ENCODE measurements at regions of chr13 and their contacts with region 1.

Region 1: GRCh38 chr13:111153279-111153976 is 38.3 kb downstream of the ARHGEF7 start:
- DNase-seq: no peak
- ATAC-seq: peak; percentile 85
- H3K4me3 ChIP-seq: peak overlapping the region; percentile 88
- H3K27ac ChIP-seq: peak overlapping the region; percentile 81
- H3K4me1 ChIP-seq: no peaks in the 10 kb centered on the region
- H3K27me3 ChIP-seq: no peaks in the 10 kb centered on the region
- CTCF ChIP-seq: peak; percentile 7 to 20 (median 7); a peak in 2 of 6 replicates
- EP300 ChIP-seq: no peak
- POLR2A ChIP-seq: peak; percentile 93
- RAD21 ChIP-seq: peak; percentile 39; the same call in 1 of the 2 replicates

Region 2: DNA sequence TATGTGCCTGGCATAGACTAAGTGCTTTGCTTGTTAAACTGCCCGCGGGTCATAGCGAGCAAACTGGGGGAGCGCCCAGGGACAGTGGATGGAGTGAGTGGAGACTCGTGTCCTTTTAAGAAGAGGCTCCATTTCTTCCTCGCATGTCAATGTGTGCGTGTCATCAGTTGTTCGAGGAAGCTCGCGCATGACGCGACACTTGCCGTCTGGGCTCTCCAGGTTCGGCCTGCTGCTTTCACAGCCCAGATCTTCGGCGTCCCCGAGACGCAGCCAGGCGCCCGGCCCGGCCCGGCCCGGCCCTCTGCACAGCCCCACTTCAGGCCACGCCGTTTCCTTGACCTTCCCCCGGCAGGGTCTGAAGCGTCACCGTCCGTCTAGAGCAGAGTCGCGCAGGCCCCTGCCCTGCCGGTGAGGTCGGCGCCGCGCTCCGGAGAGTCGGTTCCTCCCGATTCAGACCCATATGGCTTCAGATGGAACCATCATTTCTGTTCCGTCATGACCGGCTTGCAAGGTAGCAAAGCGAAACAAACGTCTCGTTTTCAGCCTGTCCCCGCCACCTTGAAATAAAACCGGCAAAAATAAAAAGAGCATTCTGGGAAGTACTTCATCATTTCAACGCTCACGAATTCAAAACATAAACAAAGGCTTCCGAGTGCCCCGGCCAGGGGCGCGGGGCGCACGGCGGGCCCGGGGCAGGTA is 38.9 kb before region 1 on chr13:
- CTCF ChIA-PET with region 1: no interaction called
- POLR2A ChIA-PET with region 1: no interaction called
- RAD21 ChIA-PET with region 1: no interaction called
- SMC1A ChIA-PET with region 1: no interaction called
- in situ Hi-C with region 1: no loop called
- intact Hi-C with region 1: no loop called
- DNase-seq: no peak
- ATAC-seq: peak; percentile 78
- H3K4me3 ChIP-seq: peak overlapping the region; percentile 77; the same call in 1 of the 2 replicates
- H3K27ac ChIP-seq: no peak overlapping the region
- H3K4me1 ChIP-seq: no peaks in the 10 kb centered on the region; the same call in 1 of the 2 replicates
- H3K27me3 ChIP-seq: peaks cover 13 to 37% of the 10 kb centered on the region in 2 experiments
- CTCF ChIP-seq: no peak
- EP300 ChIP-seq: no peak
- POLR2A ChIP-seq: no peak
- RAD21 ChIP-seq: no peak

Region 3: GRCh38 chr13:111165241-111166010 is 12.0 kb after region 1 on chr13:
- CTCF ChIA-PET with region 1: interaction called, 3 read pairs
- POLR2A ChIA-PET with region 1: interaction called, 4 read pairs
- RAD21 ChIA-PET with region 1: no interaction called
- SMC1A ChIA-PET with region 1: interaction called, 12 read pairs
- in situ Hi-C with region 1: no loop called
- intact Hi-C with region 1: no loop called
- DNase-seq: no peak
- ATAC-seq: peak; percentile 77
- H3K4me3 ChIP-seq: peak overlapping the region; percentile 36; the same call in 1 of the 2 replicates
- H3K27ac ChIP-seq: peak overlapping the region; percentile 66
- H3K4me1 ChIP-seq: peaks cover 53% of the 10 kb centered on the region
- H3K27me3 ChIP-seq: no peaks in the 10 kb centered on the region
- CTCF ChIP-seq: no peak
- EP300 ChIP-seq: no peak
- POLR2A ChIP-seq: no peak
- RAD21 ChIP-seq: no peak

Region 4: DNA sequence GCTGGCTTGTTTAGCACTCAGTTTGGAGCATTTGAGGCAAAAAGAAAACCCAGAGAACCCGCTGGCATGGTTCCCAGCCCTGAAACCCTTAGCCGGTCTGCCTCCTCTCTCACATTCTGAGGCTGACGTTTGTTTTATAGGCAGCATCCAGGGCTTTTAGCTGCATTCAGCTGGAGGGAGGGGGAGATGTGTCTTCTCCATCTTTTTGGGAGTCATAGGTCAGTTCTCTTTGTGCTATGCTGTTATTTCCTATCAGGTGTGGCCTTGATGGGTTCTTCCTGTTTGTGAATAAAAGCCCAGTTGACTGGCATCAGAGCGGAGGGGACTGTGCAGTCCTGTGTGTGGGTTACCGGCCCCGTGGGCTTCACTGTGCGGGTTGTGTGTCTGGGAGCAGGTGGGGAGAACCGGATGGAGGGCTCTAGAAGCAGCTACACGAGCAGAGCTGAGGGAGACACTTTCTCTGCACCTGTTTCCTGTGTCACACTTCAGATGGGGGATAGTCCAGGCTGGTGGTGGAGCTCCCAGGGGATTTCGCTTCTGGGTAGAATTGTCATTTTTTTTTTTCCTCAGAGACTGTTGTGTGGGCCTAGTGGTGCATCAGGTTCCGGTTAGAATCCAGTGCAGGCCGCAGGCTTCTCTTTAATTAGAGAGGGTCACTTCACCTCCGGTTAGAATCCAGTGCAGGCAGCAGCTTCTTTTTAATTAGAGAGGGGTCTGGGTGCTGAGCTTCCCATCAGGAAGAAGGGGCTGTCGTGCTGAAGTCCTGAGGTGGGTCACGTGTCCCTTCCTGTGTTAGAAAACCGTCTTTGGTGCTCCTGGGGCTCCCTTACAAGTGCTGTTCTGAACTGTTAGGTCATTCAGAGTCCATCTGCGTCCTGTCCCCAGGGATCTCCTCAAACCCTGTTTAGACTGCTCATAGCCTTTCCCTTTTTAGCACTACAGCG is 31.3 kb after region 1 on chr13:
- CTCF ChIA-PET with region 1: interaction called, 5 read pairs
- POLR2A ChIA-PET with region 1: interaction called, 12 read pairs
- RAD21 ChIA-PET with region 1: interaction called, 36 read pairs
- SMC1A ChIA-PET with region 1: interaction called, 21 read pairs
- in situ Hi-C with region 1: no loop called
- intact Hi-C with region 1: loop called (anchors 1 kb)
- DNase-seq: peak; percentile 93
- ATAC-seq: peak; percentile 91
- H3K4me3 ChIP-seq: peak overlapping the region; percentile 67
- H3K27ac ChIP-seq: peak overlapping the region; percentile 70
- H3K4me1 ChIP-seq: peaks cover 47% of the 10 kb centered on the region
- H3K27me3 ChIP-seq: no peaks in the 10 kb centered on the region
- CTCF ChIP-seq: no peak
- EP300 ChIP-seq: peak; percentile 59 to 77; a peak in 3 of 4 replicates
- POLR2A ChIP-seq: peak; percentile 58
- RAD21 ChIP-seq: no peak

Region 5: GRCh38 chr13:111216166-111216960 is 62.9 kb after region 1 on chr13:
- CTCF ChIA-PET with region 1: interaction called, 33 read pairs
- POLR2A ChIA-PET with region 1: no interaction called
- RAD21 ChIA-PET with region 1: interaction called, 5 read pairs
- SMC1A ChIA-PET with region 1: interaction called, 4 read pairs
- in situ Hi-C with region 1: no loop called
- intact Hi-C with region 1: no loop called
- DNase-seq: no peak
- ATAC-seq: peak; percentile 91
- H3K4me3 ChIP-seq: no peak overlapping the region
- H3K27ac ChIP-seq: no peak overlapping the region
- H3K4me1 ChIP-seq: peaks cover 7% of the 10 kb centered on the region
- H3K27me3 ChIP-seq: no peaks in the 10 kb centered on the region
- CTCF ChIP-seq: peak; percentile 52 to 55 (median 53); a peak in 5 of 6 replicates
- EP300 ChIP-seq: no peak
- POLR2A ChIP-seq: no peak
- RAD21 ChIP-seq: peak; percentile 52; the same call in 1 of the 2 replicates